A549 (cell line): ENCODE measurements at regions of chr5 and their contacts with region 1.

Region 1: GRCh38 chr5:140557136-140557805 is at the start of gene SRA1:
- DNase-seq: peak; percentile 90 to 97
- ATAC-seq: peak; percentile 93 to 97
- H3K4me3 ChIP-seq: peak within 1 kb of the TSS; percentile 75
- H3K27ac ChIP-seq: peak within 1 kb of the TSS; percentile 89 to 96
- H3K4me1 ChIP-seq: peaks cover 31% of the 10 kb centered on the region
- CTCF ChIP-seq: no peak
- EP300 ChIP-seq: no peak
- POLR2A ChIP-seq: peak; percentile 97
- RAD21 ChIP-seq: 0 out of 5 replicates have a peak, but pooled peaks of 1 of the 2 experiments have one; percentile 21
- polyA plus RNA-seq, gene SRA1: 48.1 and 50.8 TPM in 2 replicates

Region 2: GRCh38 chr5:140005145-140005591 is 552.1 kb before region 1 on chr5:
- CTCF ChIA-PET with region 1: no interaction called
- POLR2A ChIA-PET with region 1: no interaction called
- DNase-seq: no peak
- ATAC-seq: 0 out of 6 replicates have a peak, but pooled peaks of 1 of the 2 experiments have one; percentile 24
- H3K4me3 ChIP-seq: no peak overlapping the region
- H3K27ac ChIP-seq: no peak overlapping the region
- H3K4me1 ChIP-seq: no peaks in the 10 kb centered on the region
- CTCF ChIP-seq: no peak
- EP300 ChIP-seq: no peak
- POLR2A ChIP-seq: no peak
- RAD21 ChIP-seq: no peak

Region 3: GRCh38 chr5:140611020-140611521 is 53.8 kb after region 1 on chr5:
- CTCF ChIA-PET with region 1: no interaction called
- POLR2A ChIA-PET with region 1: no interaction called
- DNase-seq: no peak
- ATAC-seq: no peak
- H3K4me3 ChIP-seq: no peak overlapping the region
- H3K27ac ChIP-seq: no peak overlapping the region
- H3K4me1 ChIP-seq: 0 out of 3 replicates have a peak, but pooled peaks cover 4% of the 10 kb centered on the region
- CTCF ChIP-seq: no peak
- EP300 ChIP-seq: no peak
- POLR2A ChIP-seq: no peak
- RAD21 ChIP-seq: no peak

Region 4: DNA sequence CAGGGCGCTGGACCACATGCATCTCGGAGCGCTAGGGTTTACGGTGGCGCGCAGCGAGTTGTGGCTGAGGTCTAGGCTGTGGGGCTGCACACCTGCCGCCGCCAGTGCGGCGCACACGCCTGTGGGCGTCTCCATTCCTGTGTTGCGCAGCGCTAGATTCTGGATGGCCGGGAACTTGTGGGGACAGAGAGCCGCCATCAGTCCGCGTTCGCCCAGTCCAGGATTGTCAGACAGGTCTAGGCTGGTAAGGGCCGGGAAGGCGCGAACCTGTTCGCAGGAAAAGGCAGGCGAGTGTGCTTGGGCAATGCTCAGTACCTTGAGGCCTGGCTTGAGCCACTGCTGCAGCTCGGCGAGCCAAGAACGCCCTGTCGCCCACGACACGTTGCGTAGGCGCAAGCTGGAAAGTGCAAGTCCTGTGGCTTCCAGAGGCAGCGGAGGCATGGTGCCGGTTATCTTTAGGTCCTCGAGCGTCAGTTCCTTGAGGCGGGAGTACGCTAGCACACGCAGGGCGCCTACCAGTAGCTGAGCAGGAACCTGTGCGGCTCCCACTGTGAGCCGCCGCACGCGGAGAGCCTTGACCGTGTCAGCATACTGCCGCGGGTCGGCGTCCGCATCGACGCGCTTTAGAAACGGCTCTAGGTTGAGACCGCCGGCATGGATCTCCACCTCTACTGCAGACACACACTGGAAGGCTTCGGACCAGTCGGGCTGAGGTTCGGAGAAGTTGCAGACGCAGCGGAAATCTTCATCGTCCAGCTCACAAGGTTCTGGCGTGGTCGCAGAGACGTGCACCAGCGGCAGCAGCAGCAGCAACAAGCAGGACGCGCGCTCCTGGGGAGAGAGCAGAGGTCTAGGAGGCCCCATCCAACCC is 75.1 kb after region 1 on chr5:
- CTCF ChIA-PET with region 1: interaction called, 11 read pairs
- POLR2A ChIA-PET with region 1: no interaction called
- DNase-seq: no peak
- ATAC-seq: no peak; a peak in 1 of 6 replicates
- H3K4me3 ChIP-seq: 0 out of 3 replicates have a peak overlapping the region, but pooled peaks have one; percentile 5
- H3K27ac ChIP-seq: peak overlapping the region; percentile 45 to 83
- H3K4me1 ChIP-seq: peaks cover 32% of the 10 kb centered on the region
- CTCF ChIP-seq: no peak
- EP300 ChIP-seq: no peak
- POLR2A ChIP-seq: no peak
- RAD21 ChIP-seq: no peak